Heart right ventricle (tissue), 16 donors: ENCODE measurements at regions of chr19 and their contacts with region 1.

Region 1: GRCh38 chr19:48445606-48446481 is at the start of gene GRWD1:
- DNase-seq: peak; percentile 80 to 92
- ATAC-seq: peak; percentile 90 to 95 (median 94)
- H3K4me3 ChIP-seq: peak within 1 kb of the TSS; percentile 78 to 99 (median 90)
- H3K27ac ChIP-seq: peak within 1 kb of the TSS; percentile 79 to 94 (median 90)
- H3K4me1 ChIP-seq: peaks cover 4 to 32% (median 24%) of the 10 kb centered on the region in 9 donors
- H3K27me3 ChIP-seq: peaks cover 0 to 34% (median 21%) of the 10 kb centered on the region in 7 donors
- CTCF ChIP-seq: peak in 1 of 9 donors; percentile 2
- total RNA-seq, gene GRWD1: 13.2 to 26.2 (median 17.0) TPM

Region 2: DNA sequence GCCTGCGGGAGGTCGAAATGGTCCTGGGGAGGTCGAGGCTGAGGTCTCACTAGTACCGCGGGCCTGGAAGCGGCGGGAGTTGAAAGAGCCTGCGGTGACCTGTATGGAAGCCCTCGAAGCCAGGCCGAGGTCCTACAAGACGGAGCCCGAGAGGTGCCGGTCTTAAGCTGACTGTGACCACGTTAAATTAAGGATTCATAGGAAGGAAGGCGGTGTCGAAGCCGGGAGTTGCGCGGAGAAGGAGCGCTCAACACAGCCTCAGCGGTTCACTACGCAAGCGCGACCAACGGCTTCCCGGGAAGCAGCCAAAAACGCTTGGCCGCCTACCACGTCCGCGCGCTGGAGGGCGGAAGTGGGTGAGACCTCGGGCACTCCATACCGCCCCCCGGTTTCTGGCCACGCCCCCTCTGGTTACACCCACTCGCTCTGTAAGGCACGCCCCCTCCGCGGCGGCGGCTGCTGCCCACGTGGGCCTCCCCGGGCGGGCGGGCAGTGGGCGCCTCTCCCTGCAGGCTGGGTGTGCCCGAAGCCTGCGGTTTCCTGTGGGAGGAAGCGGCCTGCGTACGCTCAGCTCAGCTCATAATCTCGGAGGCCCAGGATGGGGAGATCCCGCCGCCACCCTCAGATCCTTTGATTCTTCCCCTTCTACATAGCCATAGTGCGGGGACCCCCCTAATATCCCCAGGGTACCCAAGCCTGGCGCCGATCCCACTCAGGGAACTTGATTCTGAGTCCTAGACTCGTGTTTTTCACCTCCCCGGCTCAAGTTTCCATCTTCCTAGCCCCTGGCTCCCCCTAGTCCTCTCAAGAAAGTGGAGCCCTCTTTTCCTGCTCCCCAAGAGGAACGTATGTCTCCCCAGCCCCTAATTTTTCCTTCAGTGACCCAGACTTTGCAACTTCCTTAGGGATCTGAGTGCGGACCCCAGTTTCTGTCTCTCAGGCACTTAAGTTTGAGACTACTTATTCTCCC is 123.9 kb before region 1 on chr19:
- intact Hi-C with region 1: no loop called
- DNase-seq: peak; percentile 98 to 100
- ATAC-seq: peak; percentile 90 to 94 (median 92)
- H3K4me3 ChIP-seq: peak overlapping the region; percentile 40 to 68 (median 60)
- H3K27ac ChIP-seq: peak overlapping the region; percentile 90 to 100 (median 98)
- H3K4me1 ChIP-seq: peaks cover 4 to 65% (median 48%) of the 10 kb centered on the region in 9 donors
- H3K27me3 ChIP-seq: no peaks in the 10 kb centered on the region
- CTCF ChIP-seq: peak in 4 of 9 donors; percentile 14 to 33 (median 25)

Region 3: DNA sequence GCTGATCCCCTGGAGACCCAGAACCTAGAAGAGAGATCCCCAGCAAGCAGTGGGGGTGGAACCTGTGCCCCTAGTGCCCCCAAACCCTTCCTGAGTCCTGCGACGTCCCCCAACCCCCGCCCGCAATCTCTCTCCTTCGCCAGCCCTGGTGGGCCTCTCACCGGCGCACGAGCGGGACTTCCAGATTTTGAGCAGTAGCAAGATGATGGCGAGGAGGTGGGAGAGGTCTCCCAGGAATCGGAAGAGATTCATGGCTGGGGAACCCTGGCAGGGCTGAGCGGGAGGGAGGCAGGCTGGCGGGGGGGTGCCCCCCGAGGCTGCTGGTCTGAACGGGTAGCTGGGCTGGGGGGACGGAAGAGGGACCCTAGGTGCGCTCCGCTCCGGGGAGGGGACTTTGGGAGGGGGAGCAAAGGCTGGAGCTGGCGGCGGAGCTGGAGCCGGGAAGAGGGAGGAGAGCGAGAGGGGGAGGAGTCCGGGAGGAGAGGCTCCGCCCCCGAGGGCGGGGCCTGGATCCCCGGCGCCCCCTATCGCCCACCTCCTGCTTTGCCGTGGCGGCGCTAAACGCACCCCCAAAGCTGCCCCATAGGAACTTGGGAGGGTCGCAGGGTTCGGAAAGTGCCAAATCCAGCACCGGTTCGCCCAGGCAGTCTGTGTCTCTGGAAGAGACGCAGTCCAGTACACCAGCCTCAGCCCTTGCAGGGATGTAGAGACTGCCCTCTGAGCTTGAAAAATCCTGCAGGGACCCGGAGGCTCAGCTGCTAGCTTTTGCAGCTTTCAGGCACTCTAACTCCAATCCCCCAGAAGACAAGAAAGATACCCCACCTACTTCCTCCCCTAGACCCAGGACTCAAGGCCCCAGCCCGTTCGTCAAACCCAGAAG is 54.5 kb before region 1 on chr19 and contains the start of gene KDELR1:
- intact Hi-C with region 1: loop called in 1 of 10 experiments (anchors 2 kb)
- DNase-seq: peak; percentile 78 to 81
- ATAC-seq: peak; percentile 92 to 97 (median 94)
- H3K4me3 ChIP-seq: peak within 1 kb of the TSS; percentile 71 to 100 (median 95)
- H3K27ac ChIP-seq: peak within 1 kb of the TSS; percentile 62 to 97 (median 90)
- H3K4me1 ChIP-seq: peaks cover 0 to 21% (median 14%) of the 10 kb centered on the region in 9 donors
- H3K27me3 ChIP-seq: peaks cover 11 to 41% (median 40%) of the 10 kb centered on the region in 7 donors
- CTCF ChIP-seq: peak; percentile 82 to 96 (median 92)
- total RNA-seq, gene KDELR1: 63.2 to 95.2 (median 73.2) TPM